ENCODE measurements at regions of chr18 and their contacts with region 1.

Region 1: GRCh38 chr18:12990967-12991838 is at the start of gene CEP192:
- DNase-seq: peak; percentile 98
- H3K4me3 Mint-ChIP-seq: peak within 1 kb of the TSS; percentile 93
- H3K27ac Mint-ChIP-seq: peak within 1 kb of the TSS; percentile 94
- H3K4me1 Mint-ChIP-seq: peaks cover 24% of the 10 kb centered on the region
- H3K27me3 Mint-ChIP-seq: peaks cover 1% of the 10 kb centered on the region
- total RNA-seq, gene CEP192: 31.2 and 32.0 TPM in 2 replicates

Region 2: GRCh38 chr18:11980555-11981382 is 1010.4 kb before region 1 on chr18:
- intact Hi-C with region 1: loop called (anchors 5 kb)
- DNase-seq: peak; percentile 96
- H3K4me3 Mint-ChIP-seq: peak overlapping the region; percentile 80
- H3K27ac Mint-ChIP-seq: peak overlapping the region; percentile 83
- H3K4me1 Mint-ChIP-seq: peaks cover 15% of the 10 kb centered on the region
- H3K27me3 Mint-ChIP-seq: peaks cover 12% of the 10 kb centered on the region

Region 3: GRCh38 chr18:12883684-12884405 is 107.4 kb before region 1 on chr18 and contains the start of gene PTPN2:
- intact Hi-C with region 1: loop called (anchors 1 kb)
- DNase-seq: peak; percentile 89
- H3K4me3 Mint-ChIP-seq: peak within 1 kb of the TSS; percentile 92
- H3K27ac Mint-ChIP-seq: peak within 1 kb of the TSS; percentile 92
- H3K4me1 Mint-ChIP-seq: peaks cover 70% of the 10 kb centered on the region
- H3K27me3 Mint-ChIP-seq: no peaks in the 10 kb centered on the region
- total RNA-seq, gene PTPN2: 76.7 and 77.1 TPM in 2 replicates

Region 4: GRCh38 chr18:12973562-12974213 is 17.5 kb before region 1 on chr18:
- intact Hi-C with region 1: no loop called
- DNase-seq: no peak
- H3K4me3 Mint-ChIP-seq: no peak overlapping the region
- H3K27ac Mint-ChIP-seq: no peak overlapping the region
- H3K4me1 Mint-ChIP-seq: peaks cover 13% of the 10 kb centered on the region
- H3K27me3 Mint-ChIP-seq: no peaks in the 10 kb centered on the region

Region 5: DNA sequence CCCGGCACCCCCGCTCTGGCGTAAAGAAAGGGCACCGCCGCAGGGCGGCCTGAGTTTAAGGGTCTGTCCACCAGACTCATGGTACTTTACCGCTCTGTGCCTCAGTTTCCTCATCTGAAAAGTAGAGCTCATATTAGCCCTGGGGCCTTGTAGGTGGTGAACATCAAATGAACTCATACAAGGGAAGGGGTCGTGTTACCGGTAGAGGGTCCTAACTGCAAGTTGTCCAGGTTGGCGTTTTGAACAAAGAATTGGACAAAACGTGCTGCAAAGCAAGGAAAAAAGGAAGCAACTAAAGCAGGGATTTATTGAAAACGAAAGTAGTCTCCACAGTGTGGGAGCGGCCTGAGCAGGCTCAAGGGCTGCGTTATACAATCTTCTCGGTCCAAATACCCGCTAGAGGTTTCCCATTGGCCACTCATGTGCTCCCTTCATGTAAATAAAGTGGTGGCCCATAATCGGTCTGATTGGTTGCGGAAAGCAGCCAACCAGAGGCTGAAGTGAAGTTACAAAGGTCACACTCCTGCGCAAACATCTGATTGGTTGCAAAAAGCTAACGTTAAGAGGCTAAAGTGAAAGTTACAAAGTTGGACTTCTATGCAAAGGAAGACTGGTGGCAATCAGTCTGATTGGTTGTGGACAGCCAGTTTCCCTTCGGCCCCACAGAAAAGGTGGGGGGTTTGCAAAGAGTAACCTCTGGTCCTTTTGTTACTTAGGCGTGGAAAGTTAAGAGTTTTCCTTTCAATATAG is 146.6 kb after region 1 on chr18:
- intact Hi-C with region 1: loop called (anchors 1 kb)
- DNase-seq: peak; percentile 76
- H3K4me3 Mint-ChIP-seq: peak overlapping the region; percentile 91
- H3K27ac Mint-ChIP-seq: peak overlapping the region; percentile 79
- H3K4me1 Mint-ChIP-seq: peaks cover 21% of the 10 kb centered on the region
- H3K27me3 Mint-ChIP-seq: peaks cover 11% of the 10 kb centered on the region

Region 6: DNA sequence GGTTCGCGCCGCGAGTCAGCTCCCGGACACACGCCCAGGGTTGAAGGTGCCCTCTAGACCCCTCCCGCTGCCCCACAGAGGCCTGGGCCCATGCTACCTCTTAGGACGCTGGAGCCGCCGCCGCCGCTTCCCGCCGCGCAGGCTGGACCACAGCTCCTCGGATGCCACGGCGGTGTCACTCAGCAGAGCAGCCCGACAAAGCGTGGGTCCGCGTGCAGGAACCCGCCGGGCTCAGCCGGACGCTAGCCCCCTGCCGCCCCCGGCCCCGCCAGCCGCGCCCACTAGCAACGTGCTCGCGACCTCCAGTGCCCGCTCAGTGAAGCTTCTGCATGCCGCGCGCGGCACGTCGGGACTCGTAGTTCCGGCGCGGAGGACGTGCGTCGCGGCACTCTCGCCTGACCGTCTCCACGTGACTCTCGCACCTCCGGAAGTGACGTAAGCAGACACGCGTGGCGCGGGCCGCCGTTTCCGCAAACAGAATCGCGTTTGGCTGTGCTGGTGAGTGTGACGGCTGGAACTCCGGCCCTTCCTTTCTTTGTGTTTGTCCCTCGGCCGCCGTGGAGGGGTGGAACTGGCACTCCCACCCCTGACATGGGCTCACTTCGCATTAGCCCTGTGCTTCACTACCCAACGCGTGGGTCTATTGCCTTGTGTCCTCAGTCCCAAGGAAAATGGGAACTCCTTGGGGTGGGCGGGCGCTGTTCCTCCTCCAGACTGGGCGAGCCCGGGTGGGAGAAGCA is 735.2 kb after region 1 on chr18 and contains the starts of genes FAM210A and RNMT:
- intact Hi-C with region 1: loop called (anchors 1 kb)
- DNase-seq: peak; percentile 94
- H3K4me3 Mint-ChIP-seq: peak within 1 kb of the TSS; percentile 93
- H3K27ac Mint-ChIP-seq: peak within 1 kb of the TSS; percentile 86
- H3K4me1 Mint-ChIP-seq: peaks cover 72% of the 10 kb centered on the region
- H3K27me3 Mint-ChIP-seq: no peaks in the 10 kb centered on the region
- total RNA-seq, gene FAM210A: 27.7 and 29.5 TPM in 2 replicates
- total RNA-seq, gene RNMT: 55.8 and 60.6 TPM in 2 replicates

Measured in activated T-helper 1 cell treated with anti-CD3 and anti-CD28 coated beads, Interleukin-12 subunit alpha, Interleukin-12 subunit beta, Interleukin-2, Interleukin-4 antibody, amounts not matched to agents 30 ng/mL and 10 ng/mL and 1 ng/mL, durations not matched to agents 14 hours and 24 hours and 36 hours (primary cell).